ENCODE measurements at regions of chr9 and their contacts with region 1.

Region 1: DNA sequence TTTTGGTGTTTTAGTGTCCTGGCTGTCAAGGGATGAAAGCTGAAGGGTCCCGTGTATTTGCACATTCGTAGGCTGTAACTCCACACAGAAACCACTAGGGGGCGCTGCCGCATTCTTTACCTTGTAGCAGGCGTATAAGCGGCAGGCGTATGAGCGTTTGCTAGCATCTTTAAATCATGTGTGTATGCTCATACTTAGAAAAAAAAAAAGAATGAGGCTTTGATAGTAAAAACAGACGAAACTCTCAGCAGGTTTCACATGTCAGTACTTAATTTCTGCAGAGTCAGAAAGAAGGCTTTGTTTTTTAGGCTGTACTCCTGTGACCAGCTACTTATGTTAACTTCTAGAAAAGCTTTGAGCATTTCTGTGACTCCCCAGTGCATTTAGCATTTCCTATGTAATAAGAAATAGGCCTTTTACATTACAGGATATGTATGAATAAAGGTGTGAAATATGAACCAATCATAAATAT is 218.8 kb upstream of the ADAMTSL1 start:
- DNase-seq: peak; percentile 41
- H3K4me3 ChIP-seq: no peak overlapping the region
- CTCF ChIP-seq: peak; percentile 83

Region 2: DNA sequence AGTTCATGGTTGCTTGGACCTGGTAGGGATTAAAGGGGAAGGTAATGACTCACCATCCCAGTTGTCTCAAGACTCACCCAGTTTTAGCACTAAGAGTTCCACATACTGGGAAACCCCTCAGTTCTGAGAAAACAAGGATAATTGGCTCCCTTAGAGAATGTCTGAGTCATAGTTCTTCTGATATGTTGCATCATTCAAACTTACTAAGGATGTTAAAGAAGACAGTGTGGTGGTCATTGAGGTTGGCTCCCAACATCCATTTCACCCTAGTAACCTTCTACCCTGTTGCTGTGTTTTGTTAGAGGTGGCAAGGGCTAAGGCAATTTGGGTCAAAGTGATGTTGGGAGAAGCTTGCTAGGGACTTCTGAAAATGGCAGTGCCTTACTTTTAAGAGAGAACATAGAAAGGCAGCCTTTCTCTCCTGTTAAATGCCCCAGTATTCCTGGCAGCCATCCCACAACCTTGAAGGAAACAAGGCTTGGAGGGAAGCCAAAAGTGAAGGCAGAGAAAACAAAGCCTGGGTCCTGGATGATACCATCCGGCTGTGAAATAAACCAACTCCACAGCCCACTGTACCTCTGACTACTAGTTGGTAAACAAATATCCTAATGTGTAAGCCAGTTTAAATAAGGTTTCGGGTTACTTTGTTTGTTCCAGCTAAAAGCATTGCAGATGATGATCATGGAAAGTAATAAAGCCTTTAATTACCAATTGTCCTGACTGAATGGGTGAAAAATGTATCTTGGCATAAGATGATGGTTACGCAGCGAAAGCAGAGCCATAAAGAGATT is 138.3 kb after region 1 on chr9:
- CTCF ChIA-PET with region 1: interaction called, 47 read pairs
- POLR2A ChIA-PET with region 1: no interaction called
- DNase-seq: peak; percentile 90
- H3K4me3 ChIP-seq: no peak overlapping the region
- CTCF ChIP-seq: no peak

Region 3: GRCh38 chr9:18459958-18460584 is 204.9 kb after region 1 on chr9:
- CTCF ChIA-PET with region 1: interaction called, 15 read pairs
- POLR2A ChIA-PET with region 1: no interaction called
- DNase-seq: no peak
- H3K4me3 ChIP-seq: no peak overlapping the region
- CTCF ChIP-seq: no peak

Region 4: GRCh38 chr9:18485714-18486113 is 230.5 kb after region 1 on chr9:
- CTCF ChIA-PET with region 1: interaction called, 14 read pairs
- POLR2A ChIA-PET with region 1: no interaction called
- DNase-seq: no peak
- H3K4me3 ChIP-seq: no peak overlapping the region
- CTCF ChIP-seq: no peak

Region 5: DNA sequence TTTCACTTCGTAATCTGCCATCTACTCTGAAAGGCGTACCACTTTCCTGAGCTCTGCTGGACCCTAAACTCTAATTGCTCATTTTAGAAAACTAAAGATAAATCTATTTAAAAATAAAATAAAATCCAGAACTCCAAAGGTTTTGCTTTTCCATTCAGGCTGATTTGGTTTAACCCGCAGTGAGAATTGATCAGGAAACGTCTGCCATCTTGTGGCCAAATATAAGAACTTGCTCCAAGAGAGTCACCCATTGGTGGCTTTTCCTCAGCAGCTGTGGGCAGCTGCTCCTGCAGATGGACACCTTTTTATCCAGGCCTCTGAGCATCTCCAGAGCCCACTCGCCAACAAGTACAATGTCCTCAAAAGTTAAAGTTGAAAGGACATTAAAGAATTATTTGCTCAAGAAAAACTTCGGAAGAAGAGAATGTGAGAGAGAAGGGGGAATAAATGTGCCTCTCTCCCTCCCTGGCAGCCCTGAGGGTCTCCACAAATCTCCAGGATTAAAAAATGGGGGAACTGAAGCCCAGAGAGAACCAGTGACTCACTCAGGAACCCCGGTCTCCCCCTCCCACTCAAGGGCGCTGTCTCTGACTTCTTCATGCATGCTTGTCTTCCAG is 773.7 kb after region 1 on chr9:
- CTCF ChIA-PET with region 1: interaction called, 52 read pairs
- POLR2A ChIA-PET with region 1: no interaction called
- DNase-seq: peak; percentile 12
- H3K4me3 ChIP-seq: no peak overlapping the region
- CTCF ChIP-seq: peak; percentile 47

Measured in AG04449 (cell line).